ENCODE measurements at regions of chr3 and their contacts with region 1.

Region 1: DNA sequence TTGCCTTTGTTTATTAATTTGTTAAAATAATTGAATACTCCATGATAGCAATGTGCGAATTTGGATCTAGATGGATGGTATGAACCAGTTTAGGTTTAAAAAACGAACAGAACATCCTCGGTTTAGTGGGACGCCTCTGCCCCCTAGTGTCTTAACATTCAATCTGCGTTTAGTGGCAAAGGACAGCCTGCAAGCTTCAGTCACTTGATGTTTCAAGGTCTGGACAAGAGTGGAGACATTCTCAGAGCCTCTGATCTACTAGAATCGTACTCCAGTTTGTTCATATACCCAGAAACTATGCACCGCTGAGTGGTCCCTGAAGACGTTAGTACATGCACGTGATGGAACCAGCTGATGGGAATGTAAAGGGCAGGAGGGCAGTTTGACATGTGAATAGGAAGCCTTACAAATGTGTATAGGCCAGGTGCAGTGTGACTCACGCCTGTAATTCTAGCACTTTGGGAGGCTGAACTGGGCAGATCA is 17.8 kb upstream of the ATP13A4 start:
- DNase-seq: peak; percentile 64
- H3K4me3 Mint-ChIP-seq: no peak overlapping the region
- H3K27ac Mint-ChIP-seq: no peak overlapping the region
- H3K4me1 Mint-ChIP-seq: no peaks in the 10 kb centered on the region
- H3K27me3 Mint-ChIP-seq: no peaks in the 10 kb centered on the region

Region 2: GRCh38 chr3:192467230-192468140 is 1105.0 kb before region 1 on chr3:
- CTCF ChIA-PET with region 1: interaction called, 7 read pairs
- POLR2A ChIA-PET with region 1: no interaction called
- intact Hi-C with region 1: loop called (anchors 2 kb)
- DNase-seq: peak; percentile 57
- H3K4me3 Mint-ChIP-seq: no peak overlapping the region
- H3K27ac Mint-ChIP-seq: no peak overlapping the region
- H3K4me1 Mint-ChIP-seq: no peaks in the 10 kb centered on the region
- H3K27me3 Mint-ChIP-seq: peaks cover 18% of the 10 kb centered on the region

Region 3: GRCh38 chr3:192980632-192981031 is 591.8 kb before region 1 on chr3:
- CTCF ChIA-PET with region 1: no interaction called
- POLR2A ChIA-PET with region 1: no interaction called
- intact Hi-C with region 1: no loop called
- DNase-seq: no peak
- H3K4me3 Mint-ChIP-seq: no peak overlapping the region
- H3K27ac Mint-ChIP-seq: no peak overlapping the region
- H3K4me1 Mint-ChIP-seq: no peaks in the 10 kb centered on the region
- H3K27me3 Mint-ChIP-seq: no peaks in the 10 kb centered on the region

Region 4: DNA sequence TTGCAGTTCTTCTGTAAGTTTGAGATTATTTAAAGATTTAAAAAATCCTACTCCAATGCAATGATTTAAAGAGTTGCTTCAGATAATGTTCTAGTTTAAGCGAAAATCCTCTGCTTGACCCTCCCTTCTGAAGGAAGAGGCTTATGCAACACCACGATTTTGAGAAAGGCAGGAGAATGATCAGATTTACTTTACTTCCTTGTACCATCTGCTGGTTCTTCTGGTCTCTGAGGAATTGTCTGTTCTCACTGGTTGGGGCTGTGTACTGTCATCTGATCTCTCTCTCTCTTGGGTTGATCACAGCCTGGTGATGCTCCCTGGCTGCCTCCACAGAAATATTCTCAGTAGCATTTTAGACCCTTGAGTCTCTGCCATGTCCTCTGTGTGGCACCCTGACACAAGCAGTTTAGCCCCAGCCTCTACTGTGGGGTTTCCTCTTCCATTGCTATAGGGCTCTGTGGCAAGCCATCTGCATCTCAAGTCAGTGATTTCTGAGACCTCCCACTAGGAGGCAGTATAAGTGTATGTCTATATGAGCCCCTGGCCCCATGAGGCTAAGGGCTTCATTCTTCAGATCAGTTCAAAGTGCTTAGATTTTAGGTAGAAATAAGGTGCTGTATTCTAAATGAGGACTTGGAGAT is 382.2 kb before region 1 on chr3:
- CTCF ChIA-PET with region 1: interaction called, 3 read pairs
- POLR2A ChIA-PET with region 1: no interaction called
- intact Hi-C with region 1: loop called (anchors 1 kb)
- DNase-seq: peak; percentile 9
- H3K4me3 Mint-ChIP-seq: no peak overlapping the region
- H3K27ac Mint-ChIP-seq: no peak overlapping the region
- H3K4me1 Mint-ChIP-seq: no peaks in the 10 kb centered on the region
- H3K27me3 Mint-ChIP-seq: peaks cover 2% of the 10 kb centered on the region

Region 5: DNA sequence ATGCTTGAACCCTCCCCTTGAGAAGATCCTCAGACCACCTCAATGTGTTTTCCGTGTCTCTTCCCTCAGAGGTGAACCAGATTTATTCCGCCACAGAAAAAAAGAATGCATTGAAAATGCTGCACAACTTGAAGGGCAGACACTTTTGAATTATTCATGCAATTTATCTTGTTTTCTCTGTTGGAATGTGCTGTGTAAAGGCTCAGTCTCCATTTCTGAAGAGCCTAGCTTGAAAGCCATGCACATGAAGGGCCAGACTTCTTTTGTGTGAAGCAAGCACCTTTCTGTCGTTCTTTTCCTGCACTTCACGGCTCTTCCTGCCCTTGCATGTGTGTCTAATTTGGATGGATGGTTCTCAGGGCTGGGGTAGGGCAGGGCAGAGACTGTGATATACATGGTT is 114.9 kb before region 1 on chr3:
- CTCF ChIA-PET with region 1: interaction called, 45 read pairs
- POLR2A ChIA-PET with region 1: no interaction called
- intact Hi-C with region 1: loop called (anchors 1 kb)
- DNase-seq: no peak
- H3K4me3 Mint-ChIP-seq: no peak overlapping the region
- H3K27ac Mint-ChIP-seq: no peak overlapping the region
- H3K4me1 Mint-ChIP-seq: peaks cover 2% of the 10 kb centered on the region
- H3K27me3 Mint-ChIP-seq: no peaks in the 10 kb centered on the region

Region 6: DNA sequence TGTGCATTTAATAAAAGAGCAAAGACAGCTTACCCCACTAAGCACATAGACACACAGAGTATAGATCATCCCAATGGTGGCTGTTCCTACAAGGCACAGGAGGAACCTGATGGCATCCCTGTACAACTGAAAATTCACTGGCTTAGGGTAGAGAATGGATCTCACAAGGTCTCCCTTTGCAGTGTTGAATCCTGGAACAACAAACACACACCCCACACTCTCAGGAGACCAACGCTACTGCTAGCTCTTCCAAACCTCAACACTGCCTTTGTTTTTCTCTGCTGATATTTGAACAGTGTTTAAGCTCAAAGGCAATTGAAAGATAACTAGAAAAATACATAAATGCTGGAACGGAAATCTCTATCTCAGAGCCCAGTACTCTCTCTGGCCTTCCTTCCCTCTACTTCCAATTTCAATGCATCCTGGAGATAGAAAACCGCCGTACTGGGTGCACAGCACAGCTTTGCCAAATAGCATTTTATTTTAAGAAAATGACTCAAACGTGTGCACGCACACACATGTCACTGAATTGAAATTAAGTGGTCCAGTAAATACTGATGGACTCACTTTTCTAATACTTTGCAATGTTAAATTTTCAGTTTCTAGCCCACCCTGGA is 106.4 kb before region 1 on chr3:
- CTCF ChIA-PET with region 1: interaction called, 45 read pairs
- POLR2A ChIA-PET with region 1: no interaction called
- intact Hi-C with region 1: loop called (anchors 1 kb)
- DNase-seq: no peak
- H3K4me3 Mint-ChIP-seq: no peak overlapping the region
- H3K27ac Mint-ChIP-seq: no peak overlapping the region
- H3K4me1 Mint-ChIP-seq: peaks cover 2% of the 10 kb centered on the region
- H3K27me3 Mint-ChIP-seq: no peaks in the 10 kb centered on the region